H1 (cell line): ENCODE measurements at regions of chr15 and their contacts with region 1.

Region 1: DNA sequence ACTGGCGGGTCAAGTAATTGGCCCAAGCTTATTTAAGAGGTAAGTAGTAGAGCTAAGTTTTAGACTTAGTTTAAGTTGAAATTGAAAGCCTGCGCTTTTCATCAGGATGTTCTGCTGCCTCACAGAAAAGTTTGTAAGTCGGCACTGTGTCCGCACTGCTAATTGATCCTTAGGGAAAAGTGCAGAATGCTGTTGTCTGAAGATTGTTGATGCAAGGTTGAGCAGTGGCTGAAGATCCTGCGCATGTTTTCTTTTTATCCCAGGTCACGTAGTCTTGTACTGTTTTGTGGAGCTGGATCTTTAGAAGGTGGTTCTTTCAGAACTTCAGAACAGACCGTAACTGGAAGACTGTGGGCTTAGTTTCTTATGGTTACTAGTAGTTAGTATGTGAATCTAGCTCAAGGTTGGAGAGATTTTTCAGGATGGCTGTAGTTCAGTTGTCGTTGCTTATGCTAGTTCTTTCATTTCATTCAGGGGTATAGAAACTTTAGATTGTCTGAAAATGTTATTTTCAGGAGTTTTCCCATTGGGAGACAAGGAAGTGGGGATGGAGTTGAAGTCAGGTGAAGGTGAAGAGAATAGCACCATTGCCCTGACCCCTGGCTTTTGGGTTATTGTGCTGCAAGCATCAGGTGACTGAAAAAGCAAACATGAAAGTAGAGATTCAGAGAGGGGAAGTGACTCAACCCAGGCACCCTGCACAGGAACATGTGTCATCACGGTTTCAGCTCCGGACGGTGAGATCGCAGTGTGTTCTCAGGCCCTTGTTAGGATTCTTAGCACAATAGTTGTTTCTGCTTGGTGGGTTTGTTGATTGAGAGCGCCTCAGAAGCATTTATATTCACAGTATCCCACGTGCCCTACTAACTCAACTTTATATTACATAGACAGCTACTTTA is 32.8 kb downstream of the AKAP13 start:
- DNase-seq: peak in 1 of 2 experiments; percentile 29
- H3K4me3 ChIP-seq: no peak overlapping the region
- H3K27ac ChIP-seq: no peak overlapping the region
- H3K4me1 ChIP-seq: peaks cover 2 to 7% (median 4%) of the 10 kb centered on the region in 4 experiments; a peak in 3 of 7 replicates
- H3K27me3 ChIP-seq: no peaks in the 10 kb centered on the region
- CTCF ChIP-seq: no peak
- EP300 ChIP-seq: no peak
- POLR2A ChIP-seq: no peak
- RAD21 ChIP-seq: no peak

Region 2: DNA sequence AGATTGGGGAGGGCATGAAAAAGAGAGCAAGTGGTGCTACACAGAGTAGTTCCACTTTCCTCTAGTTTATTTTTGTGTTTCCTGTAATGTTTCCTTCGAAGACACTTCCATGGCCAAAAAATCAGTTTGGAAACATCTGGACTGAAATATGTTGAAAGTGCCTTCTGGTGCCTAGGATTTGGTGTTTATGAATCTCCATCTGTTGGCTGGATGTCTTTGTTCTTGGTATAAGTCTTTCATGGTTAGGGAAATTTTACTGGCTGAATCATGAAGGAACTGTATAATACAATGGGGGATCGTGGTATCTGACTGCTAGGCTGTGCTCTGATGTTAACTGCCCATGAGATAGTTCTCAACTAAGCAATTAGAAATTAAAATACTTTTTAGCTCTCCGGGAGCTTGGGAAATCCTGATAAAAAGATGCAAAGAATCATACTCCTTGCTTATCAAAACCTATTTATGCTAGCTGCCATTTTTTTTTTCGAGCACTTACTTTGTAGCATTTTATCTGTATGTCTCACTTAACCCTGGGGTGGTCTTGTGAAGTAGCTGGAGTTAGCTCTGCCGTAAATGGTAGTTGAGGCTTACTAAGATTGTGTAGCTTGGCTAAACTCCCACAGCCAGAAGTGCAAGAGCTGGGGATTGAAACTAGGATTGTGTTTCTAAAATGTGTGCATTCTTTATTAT is 10.9 kb before region 1 on chr15:
- CTCF ChIA-PET with region 1: interaction called, 22 read pairs
- POLR2A ChIA-PET with region 1: interaction called, 3 read pairs
- DNase-seq: no peak
- H3K4me3 ChIP-seq: no peak overlapping the region
- H3K27ac ChIP-seq: no peak overlapping the region
- H3K4me1 ChIP-seq: peaks cover 0 to 4% (median 2%) of the 10 kb centered on the region in 4 experiments; a peak in 5 of 7 replicates
- H3K27me3 ChIP-seq: no peaks in the 10 kb centered on the region
- CTCF ChIP-seq: no peak
- EP300 ChIP-seq: no peak
- POLR2A ChIP-seq: no peak
- RAD21 ChIP-seq: no peak